ENCODE measurements at regions of chr5 and their contacts with region 1.

Region 1: GRCh38 chr5:118987988-118988865 is at the start of gene DTWD2:
- DNase-seq: peak; percentile 95
- ATAC-seq: peak; percentile 88
- H3K4me3 Mint-ChIP-seq: peak within 1 kb of the TSS; percentile 84
- H3K27ac Mint-ChIP-seq: peak within 1 kb of the TSS; percentile 83
- H3K4me1 Mint-ChIP-seq: peaks cover 33% of the 10 kb centered on the region
- H3K27me3 Mint-ChIP-seq: no peaks in the 10 kb centered on the region
- CTCF ChIP-seq: peak; percentile 93
- total RNA-seq, gene DTWD2: 3.5 and 4.0 TPM in 2 replicates

Region 2: GRCh38 chr5:118906932-118907331 is 81.3 kb before region 1 on chr5:
- CTCF ChIA-PET with region 1: no interaction called
- POLR2A ChIA-PET with region 1: no interaction called
- intact Hi-C with region 1: no loop called
- DNase-seq: no peak
- ATAC-seq: no peak
- H3K4me3 Mint-ChIP-seq: no peak overlapping the region
- H3K27ac Mint-ChIP-seq: no peak overlapping the region
- H3K4me1 Mint-ChIP-seq: peaks cover 2% of the 10 kb centered on the region
- H3K27me3 Mint-ChIP-seq: no peaks in the 10 kb centered on the region
- CTCF ChIP-seq: no peak

Region 3: GRCh38 chr5:119011186-119011585 is 23.0 kb after region 1 on chr5:
- CTCF ChIA-PET with region 1: interaction called, 11 read pairs
- POLR2A ChIA-PET with region 1: interaction called, 5 read pairs
- intact Hi-C with region 1: loop called (anchors 1 kb)
- DNase-seq: no peak
- ATAC-seq: no peak
- H3K4me3 Mint-ChIP-seq: no peak overlapping the region
- H3K27ac Mint-ChIP-seq: no peak overlapping the region
- H3K4me1 Mint-ChIP-seq: peaks cover 12% of the 10 kb centered on the region
- H3K27me3 Mint-ChIP-seq: no peaks in the 10 kb centered on the region
- CTCF ChIP-seq: no peak

Region 4: DNA sequence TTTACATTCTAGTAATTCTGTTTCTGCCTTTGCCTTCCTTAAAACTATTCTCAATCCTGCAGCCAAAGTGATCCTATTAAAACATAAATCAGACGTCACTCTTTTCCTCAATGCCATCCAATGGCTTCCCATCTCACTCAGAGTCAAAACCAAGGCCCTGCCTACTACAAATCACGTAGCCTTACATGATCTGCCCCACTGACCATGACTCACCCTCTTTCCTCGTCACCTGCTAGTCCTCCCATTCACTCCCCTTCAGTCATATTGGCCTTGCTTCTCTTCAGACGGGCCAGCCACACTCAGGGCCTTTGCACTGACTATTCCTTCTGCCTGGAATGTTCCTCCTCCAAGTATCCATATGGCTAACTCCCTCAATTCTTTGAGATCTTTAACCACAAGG is 43.7 kb after region 1 on chr5:
- CTCF ChIA-PET with region 1: interaction called, 3 read pairs
- POLR2A ChIA-PET with region 1: interaction called, 3 read pairs
- intact Hi-C with region 1: loop called (anchors 1 kb)
- DNase-seq: no peak
- ATAC-seq: peak; percentile 87
- H3K4me3 Mint-ChIP-seq: peak overlapping the region; percentile 60
- H3K27ac Mint-ChIP-seq: peak overlapping the region; percentile 95
- H3K4me1 Mint-ChIP-seq: peaks cover 63% of the 10 kb centered on the region
- H3K27me3 Mint-ChIP-seq: no peaks in the 10 kb centered on the region
- CTCF ChIP-seq: no peak

Region 5: GRCh38 chr5:119255571-119256356 is 267.5 kb after region 1 on chr5:
- CTCF ChIA-PET with region 1: interaction called, 3 read pairs
- POLR2A ChIA-PET with region 1: no interaction called
- intact Hi-C with region 1: loop called (anchors 1 kb)
- DNase-seq: no peak
- ATAC-seq: no peak
- H3K4me3 Mint-ChIP-seq: no peak overlapping the region
- H3K27ac Mint-ChIP-seq: no peak overlapping the region
- H3K4me1 Mint-ChIP-seq: peaks cover 2% of the 10 kb centered on the region
- H3K27me3 Mint-ChIP-seq: no peaks in the 10 kb centered on the region
- CTCF ChIP-seq: no peak

Region 6: GRCh38 chr5:119340597-119341218 is 352.5 kb after region 1 on chr5:
- CTCF ChIA-PET with region 1: no interaction called
- POLR2A ChIA-PET with region 1: interaction called, 4 read pairs
- intact Hi-C with region 1: loop called (anchors 1 kb)
- DNase-seq: no peak
- ATAC-seq: peak; percentile 25
- H3K4me3 Mint-ChIP-seq: peak overlapping the region; percentile 79
- H3K27ac Mint-ChIP-seq: peak overlapping the region; percentile 96
- H3K4me1 Mint-ChIP-seq: peaks cover 95% of the 10 kb centered on the region
- H3K27me3 Mint-ChIP-seq: no peaks in the 10 kb centered on the region
- CTCF ChIP-seq: no peak

Region 7: GRCh38 chr5:119435436-119436132 is 447.4 kb after region 1 on chr5:
- CTCF ChIA-PET with region 1: interaction called, 30 read pairs
- POLR2A ChIA-PET with region 1: no interaction called
- intact Hi-C with region 1: loop called (anchors 1 kb)
- DNase-seq: peak; percentile 73
- ATAC-seq: peak; percentile 93
- H3K4me3 Mint-ChIP-seq: peak overlapping the region; percentile 29
- H3K27ac Mint-ChIP-seq: peak overlapping the region; percentile 19
- H3K4me1 Mint-ChIP-seq: peaks cover 32% of the 10 kb centered on the region
- H3K27me3 Mint-ChIP-seq: no peaks in the 10 kb centered on the region
- CTCF ChIP-seq: peak; percentile 81